Activated CD4-positive, alpha-beta T cell treated with anti-CD3 and anti-CD28 coated beads for 36 hours (primary cell): ENCODE measurements at regions of chr6 and their contacts with region 1.

Region 1: DNA sequence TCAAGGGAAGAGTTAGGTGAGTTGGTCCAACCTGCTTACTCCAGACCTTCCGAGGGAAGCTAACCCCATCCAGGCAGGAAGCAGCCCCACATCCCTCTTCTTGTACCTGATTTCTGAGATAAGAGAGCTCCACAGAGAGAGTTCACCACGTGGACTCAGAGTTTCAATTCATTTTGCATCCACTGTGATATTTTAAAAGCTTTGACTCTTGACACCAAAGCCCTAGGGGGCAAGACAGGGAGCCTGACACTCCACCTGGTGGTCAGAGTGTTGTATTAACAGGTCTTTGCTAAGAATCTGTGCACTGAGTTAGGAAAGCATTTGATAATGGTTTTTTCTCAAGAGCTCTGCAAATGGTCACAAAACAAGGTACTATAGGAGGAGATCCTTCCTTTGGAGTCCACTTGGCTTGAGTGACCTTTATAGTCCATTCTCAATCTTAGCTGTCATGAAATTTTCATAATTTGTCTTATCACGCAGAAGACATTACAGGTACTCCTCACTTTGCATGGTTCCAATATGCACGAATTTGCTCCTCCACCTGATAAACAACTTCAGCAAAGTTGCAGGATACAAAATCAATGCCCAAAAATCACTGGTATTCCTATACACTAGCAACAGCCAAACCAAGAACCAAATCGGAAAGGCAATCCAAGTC is 56.2 kb upstream of the RIPOR2 start:
- DNase-seq: peak; percentile 83
- ATAC-seq: peak; percentile 91
- H3K4me3 Mint-ChIP-seq: peak overlapping the region; percentile 49
- H3K27ac Mint-ChIP-seq: peak overlapping the region; percentile 82
- H3K4me1 Mint-ChIP-seq: peaks cover 63% of the 10 kb centered on the region
- H3K27me3 Mint-ChIP-seq: no peaks in the 10 kb centered on the region

Region 2: DNA sequence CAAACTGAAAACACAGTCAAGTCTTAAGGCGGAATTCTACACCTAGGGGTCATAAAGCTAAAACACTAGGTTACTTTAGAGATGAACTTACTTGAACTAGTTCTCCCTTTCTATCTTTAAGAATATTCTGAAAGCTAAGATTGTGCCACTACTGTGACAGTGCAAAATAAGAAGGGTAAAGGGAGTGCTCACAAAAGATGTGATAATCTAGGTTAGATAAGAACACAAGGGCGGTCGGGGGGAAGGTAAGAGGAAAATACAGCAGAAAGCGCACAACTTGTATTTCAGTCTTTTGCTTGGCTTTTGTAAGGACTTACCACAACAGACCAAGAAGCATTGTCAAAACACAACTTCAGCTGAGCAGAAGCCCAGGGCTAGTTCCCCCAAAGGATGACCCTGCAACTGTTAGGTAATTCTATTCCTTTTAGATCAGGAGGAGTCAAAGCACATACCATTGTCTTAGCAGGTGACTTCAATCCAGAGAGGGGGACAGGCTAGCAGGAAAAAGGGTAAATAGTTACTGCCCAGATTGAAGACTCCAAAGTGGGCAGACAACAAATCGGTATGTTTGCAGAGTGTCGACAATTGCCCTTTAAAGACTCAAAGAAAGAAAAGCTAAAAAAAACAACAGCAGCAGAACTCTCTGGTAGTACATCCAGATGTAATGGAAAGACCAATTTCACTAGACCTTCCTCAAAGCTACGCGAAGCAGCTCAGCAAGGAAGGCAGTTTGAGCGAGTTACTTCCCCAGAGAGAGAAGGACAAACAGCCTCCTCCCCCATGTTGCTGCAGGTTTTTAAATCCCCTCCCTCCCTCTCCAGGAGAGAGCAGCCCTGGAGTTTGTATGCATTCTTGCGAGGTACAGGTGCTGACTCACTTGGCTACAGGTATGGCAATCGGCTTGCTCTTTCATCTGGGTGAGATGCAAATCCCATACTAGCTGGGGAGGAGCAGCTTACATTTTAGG is 115.2 kb before region 1 on chr6:
- CTCF ChIA-PET with region 1: interaction called, 30 read pairs
- POLR2A ChIA-PET with region 1: no interaction called
- intact Hi-C with region 1: no loop called
- DNase-seq: no peak
- ATAC-seq: no peak
- H3K4me3 Mint-ChIP-seq: no peak overlapping the region
- H3K27ac Mint-ChIP-seq: peak overlapping the region; percentile 40
- H3K4me1 Mint-ChIP-seq: peaks cover 68% of the 10 kb centered on the region
- H3K27me3 Mint-ChIP-seq: no peaks in the 10 kb centered on the region

Region 3: DNA sequence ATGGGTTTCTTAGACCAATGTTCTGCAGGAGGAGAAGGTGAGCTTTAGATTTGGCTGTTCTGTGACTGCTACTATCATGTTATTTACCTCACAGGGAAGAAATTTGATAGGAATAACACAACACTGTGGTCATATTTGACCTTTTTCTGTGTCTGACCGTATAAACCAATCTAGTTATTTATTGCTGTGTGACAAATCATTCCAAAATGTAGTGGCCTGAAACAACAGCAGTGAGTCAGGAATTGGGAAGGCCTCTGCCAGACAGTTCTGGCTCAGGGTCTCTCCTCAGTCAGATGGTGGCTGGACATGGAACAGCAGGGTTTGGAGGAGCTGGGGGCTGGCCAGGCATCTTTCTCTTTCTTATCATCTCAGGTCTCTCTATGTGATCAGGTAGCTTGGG is 89.2 kb before region 1 on chr6:
- CTCF ChIA-PET with region 1: interaction called, 27 read pairs
- POLR2A ChIA-PET with region 1: no interaction called
- intact Hi-C with region 1: no loop called
- DNase-seq: no peak
- ATAC-seq: no peak
- H3K4me3 Mint-ChIP-seq: no peak overlapping the region
- H3K27ac Mint-ChIP-seq: peak overlapping the region; percentile 78
- H3K4me1 Mint-ChIP-seq: peaks cover 92% of the 10 kb centered on the region
- H3K27me3 Mint-ChIP-seq: no peaks in the 10 kb centered on the region

Region 4: GRCh38 chr6:24927985-24928745 is 63.8 kb before region 1 on chr6:
- CTCF ChIA-PET with region 1: interaction called, 152 read pairs
- POLR2A ChIA-PET with region 1: interaction called, 13 read pairs
- intact Hi-C with region 1: loop called in 1 of 2 experiments (anchors 2 kb)
- DNase-seq: no peak
- ATAC-seq: peak; percentile 15
- H3K4me3 Mint-ChIP-seq: peak overlapping the region; percentile 84
- H3K27ac Mint-ChIP-seq: peak overlapping the region; percentile 95
- H3K4me1 Mint-ChIP-seq: peaks cover 90% of the 10 kb centered on the region
- H3K27me3 Mint-ChIP-seq: no peaks in the 10 kb centered on the region

Region 5: GRCh38 chr6:24960991-24961475 is 30.9 kb before region 1 on chr6:
- CTCF ChIA-PET with region 1: interaction called, 17 read pairs
- POLR2A ChIA-PET with region 1: interaction called, 3 read pairs
- intact Hi-C with region 1: no loop called
- DNase-seq: no peak
- ATAC-seq: peak; percentile 45
- H3K4me3 Mint-ChIP-seq: peak overlapping the region; percentile 24
- H3K27ac Mint-ChIP-seq: peak overlapping the region; percentile 86
- H3K4me1 Mint-ChIP-seq: peaks cover 74% of the 10 kb centered on the region
- H3K27me3 Mint-ChIP-seq: no peaks in the 10 kb centered on the region

Region 6: GRCh38 chr6:24980507-24981387 is 11.2 kb before region 1 on chr6:
- CTCF ChIA-PET with region 1: interaction called, 82 read pairs
- POLR2A ChIA-PET with region 1: interaction called, 3 read pairs
- intact Hi-C with region 1: no loop called
- DNase-seq: no peak
- ATAC-seq: peak; percentile 71
- H3K4me3 Mint-ChIP-seq: no peak overlapping the region
- H3K27ac Mint-ChIP-seq: no peak overlapping the region
- H3K4me1 Mint-ChIP-seq: peaks cover 56% of the 10 kb centered on the region
- H3K27me3 Mint-ChIP-seq: no peaks in the 10 kb centered on the region

Region 7: GRCh38 chr6:25027221-25027916 is 35.4 kb after region 1 on chr6:
- CTCF ChIA-PET with region 1: interaction called, 38 read pairs
- POLR2A ChIA-PET with region 1: no interaction called
- intact Hi-C with region 1: no loop called
- DNase-seq: peak; percentile 90
- ATAC-seq: peak; percentile 95
- H3K4me3 Mint-ChIP-seq: peak overlapping the region; percentile 62
- H3K27ac Mint-ChIP-seq: peak overlapping the region; percentile 77
- H3K4me1 Mint-ChIP-seq: peaks cover 51% of the 10 kb centered on the region
- H3K27me3 Mint-ChIP-seq: no peaks in the 10 kb centered on the region